Breast epithelium (tissue), 4 donors: ENCODE measurements at regions of chr12 and their contacts with region 1.

Region 1: DNA sequence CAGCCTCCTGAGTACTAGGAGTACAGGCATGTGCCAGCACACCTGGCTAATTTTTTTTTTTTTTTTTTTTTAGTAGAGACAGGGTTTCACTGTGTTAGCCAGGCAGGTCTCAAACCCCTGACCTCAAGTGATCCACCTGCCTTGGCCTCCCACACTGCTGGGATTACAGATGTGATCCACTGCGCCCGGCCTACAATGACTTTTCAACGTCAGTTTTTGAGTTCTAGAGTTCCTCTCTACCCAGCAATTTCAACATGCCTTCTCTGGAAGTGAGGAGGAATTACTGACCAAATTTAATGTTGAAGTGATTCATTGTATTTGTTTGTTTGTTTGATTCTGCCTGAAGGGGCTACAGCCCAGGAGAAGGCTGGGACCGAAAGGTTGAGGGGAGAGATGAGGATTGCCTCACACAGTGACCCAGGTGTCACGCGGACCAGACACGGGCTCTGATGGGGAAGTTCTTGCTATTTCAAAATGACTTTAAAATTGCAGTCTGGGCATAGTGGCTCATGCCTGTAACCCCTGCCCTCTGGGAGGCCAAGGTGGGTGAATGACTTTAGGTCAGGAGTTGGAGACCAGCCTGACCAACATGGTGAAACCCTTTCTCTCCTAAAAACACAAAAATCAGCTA is 8.6 kb upstream of the DENR start:
- DNase-seq: no peak
- H3K4me3 ChIP-seq: no peak overlapping the region
- H3K27ac ChIP-seq: no peak overlapping the region
- H3K4me1 ChIP-seq: no peaks in the 10 kb centered on the region
- H3K27me3 ChIP-seq: no peaks in the 10 kb centered on the region
- CTCF ChIP-seq: no peak
- POLR2A ChIP-seq: no peak

Region 2: GRCh38 chr12:120849765-120850164 is 1894.2 kb before region 1 on chr12:
- intact Hi-C with region 1: loop called (anchors 5 kb)
- DNase-seq: no peak
- H3K4me3 ChIP-seq: no peak overlapping the region
- H3K27ac ChIP-seq: peak overlapping the region; percentile 36 to 38
- H3K4me1 ChIP-seq: peaks cover 0 to 20% of the 10 kb centered on the region in 2 donors
- H3K27me3 ChIP-seq: no peaks in the 10 kb centered on the region
- CTCF ChIP-seq: no peak
- POLR2A ChIP-seq: no peak